Activated CD4-positive, alpha-beta T cell treated with anti-CD3 and anti-CD28 coated beads for 36 hours (primary cell): ENCODE measurements at regions of chr14 and their contacts with region 1.

Region 1: DNA sequence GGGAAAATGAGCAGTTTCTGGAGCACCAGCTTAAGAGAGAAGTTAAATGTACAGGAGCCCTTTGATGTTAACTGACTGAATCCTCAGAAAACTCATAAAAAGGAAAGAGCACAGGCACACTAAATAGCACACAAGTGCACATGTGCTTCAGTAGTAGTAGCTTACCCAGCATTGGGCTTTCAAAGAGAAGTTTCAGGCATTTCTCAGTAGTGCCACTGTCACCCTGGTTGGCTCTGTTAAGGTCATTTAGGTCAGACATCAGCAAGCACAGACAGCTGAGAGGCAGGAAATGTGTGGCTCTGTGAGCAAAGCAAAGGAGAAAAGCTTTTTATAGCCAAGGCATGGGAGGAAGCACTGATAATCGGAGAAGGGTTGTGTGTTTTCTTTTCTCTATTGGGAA is 96.3 kb upstream of the HIF1A start:
- DNase-seq: peak; percentile 47
- ATAC-seq: peak; percentile 49
- H3K4me3 Mint-ChIP-seq: no peak overlapping the region
- H3K27ac Mint-ChIP-seq: peak overlapping the region; percentile 59
- H3K4me1 Mint-ChIP-seq: peaks cover 55% of the 10 kb centered on the region
- H3K27me3 Mint-ChIP-seq: no peaks in the 10 kb centered on the region

Region 2: GRCh38 chr14:60248697-60249318 is 1350.2 kb before region 1 on chr14 and contains the start of gene PPM1A:
- CTCF ChIA-PET with region 1: no interaction called
- POLR2A ChIA-PET with region 1: no interaction called
- intact Hi-C with region 1: loop called in 1 of 2 experiments (anchors 10 kb)
- DNase-seq: peak; percentile 97
- ATAC-seq: peak; percentile 73
- H3K4me3 Mint-ChIP-seq: peak within 1 kb of the TSS; percentile 94
- H3K27ac Mint-ChIP-seq: peak within 1 kb of the TSS; percentile 100
- H3K4me1 Mint-ChIP-seq: peaks cover 50% of the 10 kb centered on the region
- H3K27me3 Mint-ChIP-seq: no peaks in the 10 kb centered on the region
- total RNA-seq, gene PPM1A: 30.4 to 41.5 TPM

Region 3: GRCh38 chr14:61065656-61066055 is 533.3 kb before region 1 on chr14:
- CTCF ChIA-PET with region 1: no interaction called
- POLR2A ChIA-PET with region 1: no interaction called
- intact Hi-C with region 1: no loop called
- DNase-seq: no peak
- ATAC-seq: no peak
- H3K4me3 Mint-ChIP-seq: no peak overlapping the region
- H3K27ac Mint-ChIP-seq: no peak overlapping the region
- H3K4me1 Mint-ChIP-seq: no peaks in the 10 kb centered on the region
- H3K27me3 Mint-ChIP-seq: no peaks in the 10 kb centered on the region

Region 4: DNA sequence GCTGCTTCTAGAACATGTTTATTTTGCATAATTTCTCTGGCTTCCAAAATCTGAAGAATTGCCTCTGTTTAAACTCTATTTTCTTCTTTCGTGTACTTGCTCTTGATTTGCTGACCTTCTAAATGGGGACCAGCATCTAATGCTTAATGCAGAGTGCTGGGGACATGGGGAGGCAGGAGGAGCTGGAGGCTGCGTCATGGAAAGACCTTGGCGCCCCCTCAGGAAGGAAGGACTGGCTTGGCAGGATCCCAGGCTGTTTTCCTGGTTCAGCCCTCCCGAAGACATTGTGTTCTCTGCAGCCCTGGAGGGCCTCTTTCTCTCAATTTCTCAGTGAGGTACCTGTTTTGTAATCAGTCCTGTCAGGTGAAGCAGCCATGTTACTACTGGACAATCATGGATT is 272.1 kb before region 1 on chr14:
- CTCF ChIA-PET with region 1: no interaction called
- POLR2A ChIA-PET with region 1: no interaction called
- intact Hi-C with region 1: no loop called
- DNase-seq: no peak
- ATAC-seq: no peak
- H3K4me3 Mint-ChIP-seq: peak overlapping the region; percentile 92
- H3K27ac Mint-ChIP-seq: peak overlapping the region; percentile 94
- H3K4me1 Mint-ChIP-seq: peaks cover 71% of the 10 kb centered on the region
- H3K27me3 Mint-ChIP-seq: no peaks in the 10 kb centered on the region

Region 5: DNA sequence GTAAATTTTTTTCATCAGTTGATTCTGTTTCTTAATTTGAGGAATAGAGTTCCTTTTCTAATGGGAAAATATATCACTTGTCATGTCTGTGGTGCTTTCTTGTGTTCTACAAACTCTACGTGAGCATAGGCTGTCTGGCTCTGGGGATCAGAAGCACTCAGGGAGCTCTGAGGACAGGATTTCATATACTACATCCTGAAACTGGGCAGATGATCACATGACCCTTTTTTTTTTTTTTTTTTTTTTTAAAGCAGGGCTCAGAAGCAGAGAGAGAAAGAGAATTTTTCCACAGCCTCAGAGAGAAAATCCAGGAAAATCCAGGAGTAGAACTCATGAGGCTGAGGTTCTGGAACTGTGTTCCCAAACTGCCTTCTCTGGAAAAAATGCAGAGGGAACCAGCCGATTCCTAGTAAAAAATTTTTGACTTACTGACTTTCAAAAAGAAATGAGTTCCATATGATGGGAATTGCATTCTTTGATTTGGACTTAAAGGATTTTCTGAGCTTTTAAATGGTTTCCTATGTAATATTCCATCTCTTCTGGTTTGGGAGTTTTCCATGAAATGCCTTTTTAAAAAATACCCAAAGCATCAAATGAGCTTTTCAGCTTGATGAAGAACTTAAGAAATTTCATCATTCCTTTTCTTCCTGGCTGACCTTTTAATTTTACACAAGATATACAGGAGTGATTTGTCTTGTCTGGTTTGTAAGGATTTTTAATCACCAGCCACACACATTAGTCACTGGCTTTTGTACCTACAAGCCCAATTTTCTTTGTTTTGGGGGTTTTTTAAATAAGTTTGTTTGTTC is 86.8 kb before region 1 on chr14:
- CTCF ChIA-PET with region 1: no interaction called
- POLR2A ChIA-PET with region 1: no interaction called
- intact Hi-C with region 1: loop called in 1 of 2 experiments (anchors 1 kb)
- DNase-seq: peak; percentile 44
- ATAC-seq: peak; percentile 59
- H3K4me3 Mint-ChIP-seq: peak overlapping the region; percentile 54
- H3K27ac Mint-ChIP-seq: peak overlapping the region; percentile 97
- H3K4me1 Mint-ChIP-seq: peaks cover 94% of the 10 kb centered on the region
- H3K27me3 Mint-ChIP-seq: no peaks in the 10 kb centered on the region

Region 6: GRCh38 chr14:61537563-61538463 is 61.2 kb before region 1 on chr14:
- CTCF ChIA-PET with region 1: no interaction called
- POLR2A ChIA-PET with region 1: no interaction called
- intact Hi-C with region 1: loop called in 1 of 2 experiments (anchors 1 kb)
- DNase-seq: peak; percentile 69
- ATAC-seq: peak; percentile 78
- H3K4me3 Mint-ChIP-seq: peak overlapping the region; percentile 16
- H3K27ac Mint-ChIP-seq: peak overlapping the region; percentile 89
- H3K4me1 Mint-ChIP-seq: peaks cover 68% of the 10 kb centered on the region
- H3K27me3 Mint-ChIP-seq: no peaks in the 10 kb centered on the region

Region 7: GRCh38 chr14:61568572-61569131 is 30.3 kb before region 1 on chr14:
- CTCF ChIA-PET with region 1: interaction called, 3 read pairs
- POLR2A ChIA-PET with region 1: interaction called, 4 read pairs
- intact Hi-C with region 1: loop called (anchors 1 to 2 kb)
- DNase-seq: peak; percentile 77
- ATAC-seq: peak; percentile 50
- H3K4me3 Mint-ChIP-seq: peak overlapping the region; percentile 47
- H3K27ac Mint-ChIP-seq: peak overlapping the region; percentile 85
- H3K4me1 Mint-ChIP-seq: peaks cover 80% of the 10 kb centered on the region
- H3K27me3 Mint-ChIP-seq: peaks cover 3% of the 10 kb centered on the region

Region 8: DNA sequence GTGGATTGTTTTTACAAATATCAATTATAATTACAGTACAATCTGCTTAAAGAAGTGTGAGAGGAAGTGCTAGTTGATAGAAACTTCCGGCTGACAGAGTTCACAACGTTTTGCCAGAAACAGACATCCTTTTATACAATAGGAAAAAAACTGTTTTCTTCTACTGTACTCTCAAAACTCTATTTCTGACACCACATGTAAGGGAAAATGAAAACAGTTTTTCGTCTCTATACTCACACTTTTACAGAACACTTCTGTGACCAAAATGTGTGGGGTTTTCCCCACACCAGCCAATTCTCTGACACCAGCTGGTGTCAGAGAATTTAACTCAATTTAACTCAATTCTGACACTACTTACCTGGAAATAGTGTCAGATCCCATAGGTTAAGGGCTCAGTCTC is 72.1 kb after region 1 on chr14:
- CTCF ChIA-PET with region 1: no interaction called
- POLR2A ChIA-PET with region 1: no interaction called
- intact Hi-C with region 1: loop called (anchors 2 kb)
- DNase-seq: peak; percentile 66
- ATAC-seq: peak; percentile 85
- H3K4me3 Mint-ChIP-seq: no peak overlapping the region
- H3K27ac Mint-ChIP-seq: no peak overlapping the region
- H3K4me1 Mint-ChIP-seq: peaks cover 25% of the 10 kb centered on the region
- H3K27me3 Mint-ChIP-seq: no peaks in the 10 kb centered on the region

Region 9: DNA sequence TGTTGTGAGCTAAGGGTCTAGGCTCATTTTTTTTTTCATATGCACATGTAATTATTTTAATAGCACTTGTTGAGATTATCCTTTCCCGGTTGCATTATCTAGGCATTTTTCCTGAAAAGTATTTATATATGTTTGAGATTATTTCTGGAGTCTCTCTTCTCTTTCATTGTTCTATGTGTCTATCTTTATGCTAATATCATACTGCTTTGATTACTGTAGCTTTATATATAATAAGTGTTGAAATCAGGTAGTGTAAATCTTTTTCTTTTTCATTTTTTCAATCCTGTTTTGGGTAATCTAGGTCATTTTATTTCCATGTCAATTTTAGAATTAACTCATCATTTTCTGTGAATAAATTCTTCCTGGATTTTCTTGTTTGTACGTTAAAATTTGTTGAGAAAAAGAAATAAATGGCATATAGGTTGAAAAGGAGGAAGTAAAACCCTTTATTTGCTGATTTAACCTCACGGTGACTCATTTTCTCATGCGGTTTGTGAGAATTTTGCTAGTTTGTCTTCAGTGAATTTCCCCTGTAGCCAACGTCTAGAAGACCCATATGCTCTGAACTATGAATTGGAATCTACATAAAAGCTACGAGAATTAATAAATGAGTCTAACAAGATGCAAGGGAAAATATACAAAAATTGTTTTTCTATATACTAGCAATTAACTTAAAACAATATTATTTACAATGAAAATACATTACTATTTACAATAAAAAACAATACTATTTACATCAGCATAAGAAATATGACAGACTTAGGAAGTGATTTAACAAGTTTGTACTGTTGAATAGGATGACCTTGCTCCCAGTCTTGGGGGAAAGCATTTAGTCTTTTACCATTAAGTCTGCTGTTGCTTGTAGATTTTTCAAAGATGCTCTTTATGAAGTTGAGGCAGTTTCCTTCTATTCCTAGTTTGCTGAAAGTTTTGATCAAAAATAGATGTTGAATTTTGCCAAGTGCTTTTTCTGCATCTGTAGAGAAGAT is 268.2 kb after region 1 on chr14:
- CTCF ChIA-PET with region 1: no interaction called
- POLR2A ChIA-PET with region 1: no interaction called
- intact Hi-C with region 1: no loop called
- DNase-seq: no peak
- ATAC-seq: no peak
- H3K4me3 Mint-ChIP-seq: no peak overlapping the region
- H3K27ac Mint-ChIP-seq: no peak overlapping the region
- H3K4me1 Mint-ChIP-seq: peaks cover 3% of the 10 kb centered on the region
- H3K27me3 Mint-ChIP-seq: peaks cover 13% of the 10 kb centered on the region